OCI-LY7 (cell line): ENCODE measurements at regions of chr17 and their contacts with region 1.

Region 1: GRCh38 chr17:27975146-27976011 is 67.1 kb upstream of the NLK start:
- DNase-seq: no peak
- H3K4me3 ChIP-seq: no peak overlapping the region
- H3K27ac ChIP-seq: no peak overlapping the region
- H3K4me1 ChIP-seq: no peaks in the 10 kb centered on the region
- CTCF ChIP-seq: no peak

Region 2: GRCh38 chr17:27635275-27635823 is 340.0 kb before region 1 on chr17:
- CTCF ChIA-PET with region 1: no interaction called
- POLR2A ChIA-PET with region 1: no interaction called
- intact Hi-C with region 1: no loop called
- DNase-seq: peak; percentile 66
- H3K4me3 ChIP-seq: no peak overlapping the region
- H3K27ac ChIP-seq: no peak overlapping the region
- H3K4me1 ChIP-seq: peaks cover 19% of the 10 kb centered on the region
- CTCF ChIP-seq: no peak

Region 3: GRCh38 chr17:27846042-27846655 is 129.2 kb before region 1 on chr17:
- CTCF ChIA-PET with region 1: no interaction called
- POLR2A ChIA-PET with region 1: no interaction called
- intact Hi-C with region 1: no loop called
- DNase-seq: no peak
- H3K4me3 ChIP-seq: no peak overlapping the region
- H3K27ac ChIP-seq: no peak overlapping the region
- H3K4me1 ChIP-seq: no peaks in the 10 kb centered on the region
- CTCF ChIP-seq: no peak

Region 4: GRCh38 chr17:27906623-27907022 is 68.8 kb before region 1 on chr17:
- CTCF ChIA-PET with region 1: no interaction called
- POLR2A ChIA-PET with region 1: no interaction called
- intact Hi-C with region 1: no loop called
- DNase-seq: no peak
- H3K4me3 ChIP-seq: no peak overlapping the region
- H3K27ac ChIP-seq: no peak overlapping the region
- H3K4me1 ChIP-seq: no peaks in the 10 kb centered on the region
- CTCF ChIP-seq: no peak

Region 5: DNA sequence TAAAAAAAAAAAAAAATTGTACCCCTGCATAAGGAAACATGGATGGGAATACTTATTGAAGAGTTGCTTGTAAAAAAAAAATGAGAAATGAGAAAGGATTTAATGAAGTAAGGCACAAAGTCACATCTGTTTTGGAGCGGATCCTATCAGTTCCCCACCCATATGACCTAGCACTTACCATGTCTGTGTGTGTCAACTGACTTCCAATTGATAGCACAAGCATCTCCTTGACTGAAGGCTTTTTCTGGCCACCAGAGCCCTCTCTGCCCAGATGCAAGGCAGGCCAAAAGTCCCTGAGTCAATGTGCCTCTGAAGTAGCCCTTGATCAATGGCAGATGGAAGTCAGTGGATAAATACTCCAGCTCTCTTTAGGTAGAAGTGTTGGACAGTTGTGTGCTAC is 53.7 kb after region 1 on chr17:
- CTCF ChIA-PET with region 1: no interaction called
- POLR2A ChIA-PET with region 1: no interaction called
- intact Hi-C with region 1: loop called (anchors 10 kb)
- DNase-seq: no peak
- H3K4me3 ChIP-seq: no peak overlapping the region
- H3K27ac ChIP-seq: no peak overlapping the region
- H3K4me1 ChIP-seq: no peaks in the 10 kb centered on the region
- CTCF ChIP-seq: no peak

Region 6: DNA sequence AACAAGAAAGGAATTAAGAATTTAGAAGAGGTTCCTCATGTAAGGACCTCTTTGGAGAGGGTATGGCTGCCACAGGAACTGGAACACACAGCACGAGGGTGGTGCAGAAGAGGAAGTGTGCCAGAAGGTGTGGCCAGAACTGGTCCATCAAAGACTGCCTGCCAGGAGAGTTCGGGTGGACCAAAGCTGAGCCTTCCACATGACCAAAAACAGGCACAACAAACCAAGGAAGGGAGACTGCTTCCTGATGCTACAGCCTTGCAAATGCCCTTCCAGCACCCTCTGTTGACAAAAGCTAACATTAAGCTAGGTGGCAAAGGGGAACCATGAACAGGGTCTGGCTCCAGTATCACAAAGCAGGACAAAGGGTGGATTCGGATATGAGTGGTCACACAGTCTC is 217.9 kb after region 1 on chr17:
- CTCF ChIA-PET with region 1: no interaction called
- POLR2A ChIA-PET with region 1: no interaction called
- intact Hi-C with region 1: loop called (anchors 10 kb)
- DNase-seq: no peak
- H3K4me3 ChIP-seq: no peak overlapping the region
- H3K27ac ChIP-seq: no peak overlapping the region
- H3K4me1 ChIP-seq: no peaks in the 10 kb centered on the region
- CTCF ChIP-seq: no peak